ENCODE measurements at regions of chr12 and their contacts with region 1.

Region 1: GRCh38 chr12:1594261-1595025 is at the start of gene FBXL14:
- DNase-seq: peak; percentile 65 to 90
- H3K4me3 ChIP-seq: peak within 1 kb of the TSS; percentile 91
- H3K27ac ChIP-seq: peak within 1 kb of the TSS; percentile 20; the same call in 1 of the 2 replicates
- H3K4me1 ChIP-seq: peaks cover 44% of the 10 kb centered on the region
- H3K27me3 ChIP-seq: no peaks in the 10 kb centered on the region
- CTCF ChIP-seq: no peak
- total RNA-seq, gene FBXL14: 16.3 and 21.1 TPM in 2 replicates

Region 2: GRCh38 chr12:452667-453210 is 1141.7 kb before region 1 on chr12:
- CTCF ChIA-PET with region 1: no interaction called
- POLR2A ChIA-PET with region 1: no interaction called
- intact Hi-C with region 1: loop called (anchors 5 kb)
- DNase-seq: no peak
- H3K4me3 ChIP-seq: no peak overlapping the region
- H3K27ac ChIP-seq: no peak overlapping the region
- H3K4me1 ChIP-seq: no peaks in the 10 kb centered on the region
- H3K27me3 ChIP-seq: peaks cover 29% of the 10 kb centered on the region
- CTCF ChIP-seq: no peak

Measured in PC-9 (cell line).